ENCODE measurements at regions of chr11 and their contacts with region 1.

Region 1: GRCh38 chr11:3412837-3413236 is 33.9 kb upstream of the ZNF195 start:
- DNase-seq: no peak
- H3K4me3 ChIP-seq: no peak overlapping the region
- H3K4me3 Mint-ChIP-seq: no peak overlapping the region
- H3K27ac ChIP-seq: no peak overlapping the region
- H3K27ac Mint-ChIP-seq: peak overlapping the region in 1 of 7 donors; percentile 43
- H3K4me1 ChIP-seq: no peaks in the 10 kb centered on the region
- H3K4me1 Mint-ChIP-seq: peaks cover 3 to 9% (median 4%) of the 10 kb centered on the region in 4 donors
- H3K27me3 ChIP-seq: no peaks in the 10 kb centered on the region
- H3K27me3 Mint-ChIP-seq: peaks cover 0 to 3% of the 10 kb centered on the region in 2 donors

Region 2: GRCh38 chr11:3341298-3341697 is 71.5 kb before region 1 on chr11:
- CTCF ChIA-PET with region 1: interaction called, 57 read pairs
- POLR2A ChIA-PET with region 1: no interaction called
- intact Hi-C with region 1: no loop called
- DNase-seq: peak; percentile 42 to 55 (median 51)
- H3K4me3 ChIP-seq: no peak overlapping the region
- H3K4me3 Mint-ChIP-seq: no peak overlapping the region
- H3K27ac ChIP-seq: no peak overlapping the region
- H3K27ac Mint-ChIP-seq: no peak overlapping the region
- H3K4me1 ChIP-seq: no peaks in the 10 kb centered on the region
- H3K4me1 Mint-ChIP-seq: no peaks in the 10 kb centered on the region
- H3K27me3 ChIP-seq: no peaks in the 10 kb centered on the region
- H3K27me3 Mint-ChIP-seq: peaks cover 29 to 43% of the 10 kb centered on the region in 2 donors

Region 3: GRCh38 chr11:3378426-3379423 is 34.1 kb before region 1 on chr11 and contains the start of gene ZNF195:
- CTCF ChIA-PET with region 1: interaction called, 14 read pairs
- POLR2A ChIA-PET with region 1: no interaction called
- intact Hi-C with region 1: no loop called
- DNase-seq: peak; percentile 95 to 99 (median 95)
- H3K4me3 ChIP-seq: peak within 1 kb of the TSS; percentile 4 to 94
- H3K4me3 Mint-ChIP-seq: peak within 1 kb of the TSS; percentile 97 to 100 (median 98)
- H3K27ac ChIP-seq: peak within 1 kb of the TSS; percentile 79
- H3K27ac Mint-ChIP-seq: peak within 1 kb of the TSS; percentile 84 to 99 (median 98)
- H3K4me1 ChIP-seq: peaks cover 40% of the 10 kb centered on the region
- H3K4me1 Mint-ChIP-seq: peaks cover 35 to 61% (median 49%) of the 10 kb centered on the region in 4 donors
- H3K27me3 ChIP-seq: no peaks in the 10 kb centered on the region
- H3K27me3 Mint-ChIP-seq: no peaks in the 10 kb centered on the region
- total RNA-seq, gene ZNF195: 35.8 to 37.1 TPM